ENCODE measurements at regions of chr21 and their contacts with region 1.

Region 1: DNA sequence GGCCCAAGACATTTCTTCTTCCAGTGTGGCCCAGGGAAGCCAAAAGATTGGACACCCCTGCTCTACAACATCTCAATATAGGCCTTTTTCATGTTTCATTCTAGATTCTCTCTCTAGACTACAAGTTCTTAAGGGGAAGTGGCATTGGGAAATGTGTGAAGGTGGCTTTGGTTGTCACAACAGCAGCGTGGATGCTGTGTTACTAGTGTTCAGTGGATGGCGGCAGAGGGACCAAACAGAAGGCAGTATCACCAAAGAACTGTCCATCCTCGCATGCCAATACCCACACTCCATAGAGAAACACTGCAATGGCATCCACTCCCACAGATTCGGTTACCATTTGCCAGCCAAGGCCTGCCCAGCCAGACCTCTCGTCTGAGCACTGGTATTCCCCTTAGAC is 24.3 kb upstream of the IFNAR2 start:
- DNase-seq: no peak
- H3K4me3 Mint-ChIP-seq: no peak overlapping the region
- H3K27ac Mint-ChIP-seq: peak overlapping the region; percentile 98
- H3K4me1 Mint-ChIP-seq: peaks cover 27% of the 10 kb centered on the region
- H3K27me3 Mint-ChIP-seq: no peaks in the 10 kb centered on the region
- CTCF ChIP-seq: no peak

Region 2: GRCh38 chr21:33229784-33230544 is 24.5 kb after region 1 on chr21 and contains the start of gene IFNAR2:
- CTCF ChIA-PET with region 1: no interaction called
- POLR2A ChIA-PET with region 1: interaction called, 16 read pairs
- intact Hi-C with region 1: no loop called
- DNase-seq: peak; percentile 54
- H3K4me3 Mint-ChIP-seq: peak within 1 kb of the TSS; percentile 82
- H3K27ac Mint-ChIP-seq: no peak within 1 kb of the TSS
- H3K4me1 Mint-ChIP-seq: peaks cover 23% of the 10 kb centered on the region
- H3K27me3 Mint-ChIP-seq: no peaks in the 10 kb centered on the region
- CTCF ChIP-seq: no peak
- total RNA-seq, gene IFNAR2: 7.3 and 8.8 TPM in 2 replicates

Region 3: DNA sequence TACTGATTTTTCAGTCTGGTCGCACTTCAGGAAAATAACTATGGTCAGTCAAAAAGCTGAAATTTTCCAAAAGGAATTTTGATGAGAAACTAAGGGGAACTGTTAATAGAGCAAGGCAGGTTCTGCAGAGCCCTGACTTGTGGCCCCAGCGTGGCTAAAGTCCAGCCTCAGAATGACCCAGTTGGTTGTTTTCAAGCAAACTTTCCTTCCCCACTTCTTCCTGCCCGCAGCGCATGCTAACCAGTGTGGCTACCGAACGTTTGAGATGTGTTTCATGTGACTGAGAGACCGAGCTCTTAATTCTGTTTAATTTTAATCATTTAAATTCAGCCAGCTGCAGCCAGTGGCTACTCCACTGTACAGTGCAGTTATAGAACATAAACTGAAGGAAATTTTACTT is 54.5 kb after region 1 on chr21:
- CTCF ChIA-PET with region 1: no interaction called
- POLR2A ChIA-PET with region 1: interaction called, 4 read pairs
- intact Hi-C with region 1: loop called (anchors 2 kb)
- DNase-seq: no peak
- H3K4me3 Mint-ChIP-seq: no peak overlapping the region
- H3K27ac Mint-ChIP-seq: peak overlapping the region; percentile 19
- H3K4me1 Mint-ChIP-seq: peaks cover 10% of the 10 kb centered on the region
- H3K27me3 Mint-ChIP-seq: no peaks in the 10 kb centered on the region
- CTCF ChIP-seq: no peak

Measured in MCF 10A (cell line).